Heart left ventricle (tissue), 16 donors: ENCODE measurements at regions of chr1 and their contacts with region 1.

Region 1: GRCh38 chr1:77219166-77219887 is at the start of gene PIGK:
- DNase-seq: peak; percentile 84 to 92 (median 91)
- ATAC-seq: peak; percentile 97 to 99 (median 98)
- H3K4me3 ChIP-seq: peak within 1 kb of the TSS; percentile 48 to 89 (median 73)
- H3K27ac ChIP-seq: peak within 1 kb of the TSS; percentile 11 to 90 (median 81)
- H3K4me1 ChIP-seq: peaks cover 0 to 15% (median 10%) of the 10 kb centered on the region in 12 donors
- H3K27me3 ChIP-seq: no peaks in the 10 kb centered on the region
- CTCF ChIP-seq: peak in 1 of 12 donors; percentile 16
- POLR2A ChIP-seq: no peak
- total RNA-seq, gene PIGK: 24.3 to 42.4 (median 28.3) TPM

Region 2: GRCh38 chr1:77164434-77164944 is 54.8 kb before region 1 on chr1:
- intact Hi-C with region 1: loop called in 1 of 10 experiments (anchors 2 kb)
- DNase-seq: no peak
- ATAC-seq: no peak
- H3K4me3 ChIP-seq: no peak overlapping the region
- H3K27ac ChIP-seq: no peak overlapping the region
- H3K4me1 ChIP-seq: no peaks in the 10 kb centered on the region
- H3K27me3 ChIP-seq: no peaks in the 10 kb centered on the region
- CTCF ChIP-seq: no peak
- POLR2A ChIP-seq: no peak

Region 3: GRCh38 chr1:77193951-77194350 is 25.4 kb before region 1 on chr1:
- intact Hi-C with region 1: loop called in 1 of 10 experiments (anchors 2 kb)
- DNase-seq: no peak
- ATAC-seq: no peak
- H3K4me3 ChIP-seq: no peak overlapping the region
- H3K27ac ChIP-seq: no peak overlapping the region
- H3K4me1 ChIP-seq: no peaks in the 10 kb centered on the region
- H3K27me3 ChIP-seq: no peaks in the 10 kb centered on the region
- CTCF ChIP-seq: no peak
- POLR2A ChIP-seq: no peak

Region 4: DNA sequence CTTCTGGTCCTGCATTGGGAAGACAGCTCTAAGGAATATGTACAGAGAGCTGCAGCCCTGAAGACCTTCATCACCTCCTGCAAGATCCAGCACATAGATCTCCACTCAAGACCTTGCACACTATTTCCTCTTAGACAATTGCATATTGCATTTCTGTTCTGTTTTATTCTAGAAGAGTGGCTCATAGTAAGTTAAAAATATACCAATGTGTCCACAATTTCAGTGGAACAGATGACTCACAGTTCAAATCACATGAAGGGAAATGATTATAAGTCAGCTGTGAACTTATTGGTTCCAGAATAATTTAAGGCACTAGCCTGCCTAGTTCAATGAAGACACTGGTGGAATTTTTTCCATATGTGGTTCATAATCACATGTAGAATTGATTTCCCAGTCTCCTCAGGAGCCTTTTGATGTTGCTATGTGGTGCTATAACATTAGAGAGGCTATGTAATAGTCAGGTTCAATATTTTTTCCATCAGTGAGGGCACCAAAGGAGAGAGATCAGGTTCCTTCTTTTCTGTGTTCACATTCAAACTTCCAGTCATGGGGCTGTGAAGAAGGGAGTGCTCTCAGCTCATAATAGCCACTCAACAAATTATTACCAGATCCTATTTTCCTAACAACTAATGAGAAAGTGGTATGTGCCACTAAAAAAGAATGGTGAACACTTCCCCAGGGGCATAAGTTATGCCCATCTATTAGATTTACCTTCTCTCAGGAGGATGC is 52.7 kb after region 1 on chr1:
- intact Hi-C with region 1: no loop called
- DNase-seq: no peak
- ATAC-seq: no peak
- H3K4me3 ChIP-seq: no peak overlapping the region
- H3K27ac ChIP-seq: no peak overlapping the region
- H3K4me1 ChIP-seq: no peaks in the 10 kb centered on the region
- H3K27me3 ChIP-seq: peaks cover 0 to 12% (median 0%) of the 10 kb centered on the region in 9 donors
- CTCF ChIP-seq: no peak
- POLR2A ChIP-seq: no peak

Region 5: DNA sequence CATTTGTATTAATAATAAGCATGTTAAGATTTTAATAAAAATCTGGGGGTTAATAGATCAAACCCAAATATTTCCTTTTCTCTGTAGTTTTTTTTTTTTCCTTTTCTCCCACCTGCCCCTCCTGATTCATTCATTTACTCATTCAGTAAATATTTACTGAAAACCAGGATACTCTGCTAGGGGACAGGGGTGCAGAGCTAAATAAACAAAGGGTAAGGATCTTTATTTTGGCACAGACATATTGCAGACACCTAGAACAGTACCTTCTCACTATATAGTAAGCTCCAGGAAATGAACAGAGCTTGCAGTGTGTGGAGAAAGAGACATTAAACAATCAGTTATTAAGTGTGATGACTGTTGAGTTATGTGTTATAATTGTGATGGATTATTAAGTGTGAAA is 123.4 kb after region 1 on chr1:
- intact Hi-C with region 1: no loop called
- DNase-seq: no peak
- ATAC-seq: no peak
- H3K4me3 ChIP-seq: no peak overlapping the region
- H3K27ac ChIP-seq: no peak overlapping the region
- H3K4me1 ChIP-seq: peaks cover 0 to 1% (median 0%) of the 10 kb centered on the region in 12 donors
- H3K27me3 ChIP-seq: peaks cover 0 to 3% (median 0%) of the 10 kb centered on the region in 9 donors
- CTCF ChIP-seq: no peak
- POLR2A ChIP-seq: no peak

Region 6: GRCh38 chr1:77632216-77632615 is 412.9 kb after region 1 on chr1:
- intact Hi-C with region 1: no loop called
- DNase-seq: no peak
- ATAC-seq: no peak
- H3K4me3 ChIP-seq: no peak overlapping the region
- H3K27ac ChIP-seq: peak overlapping the region in 1 of 12 donors; percentile 32
- H3K4me1 ChIP-seq: peaks cover 0 to 3% (median 0%) of the 10 kb centered on the region in 12 donors
- H3K27me3 ChIP-seq: no peaks in the 10 kb centered on the region
- CTCF ChIP-seq: no peak
- POLR2A ChIP-seq: no peak